MCF 10A (cell line): ENCODE measurements at regions of chr6 and their contacts with region 1.

Region 1: DNA sequence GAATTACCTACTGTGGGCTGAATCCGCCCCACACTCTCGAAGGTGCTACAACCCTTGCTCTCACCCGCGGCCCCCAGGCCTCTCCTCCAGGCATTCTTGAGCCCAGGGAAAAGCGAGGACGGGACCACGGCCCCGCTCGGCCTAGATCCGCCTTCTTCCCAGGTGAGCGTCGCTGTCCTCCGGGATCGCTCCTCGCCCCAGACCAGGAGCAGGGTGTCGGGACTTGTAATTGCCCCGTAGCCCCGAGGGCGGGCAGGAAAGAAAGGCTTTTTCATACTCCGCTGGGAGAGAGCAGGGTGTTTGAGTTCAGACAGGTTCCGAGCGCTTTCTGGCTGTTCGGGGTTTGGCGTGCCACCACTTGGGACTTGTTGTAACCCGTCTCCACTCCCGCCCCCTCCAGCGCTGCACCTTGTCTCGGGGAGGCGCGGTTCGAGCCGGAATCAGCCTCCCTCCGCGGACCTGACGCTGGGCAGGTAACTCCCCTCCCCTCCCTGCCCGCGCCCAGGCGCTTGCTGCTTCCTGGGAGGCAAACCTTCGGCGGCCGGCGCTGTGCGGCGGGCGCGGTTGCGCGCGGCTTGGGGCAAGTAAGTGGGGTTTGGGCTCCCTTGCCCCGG is at the start of gene FAM83B:
- DNase-seq: peak; percentile 94
- H3K4me3 Mint-ChIP-seq: peak within 1 kb of the TSS; percentile 88
- H3K27ac Mint-ChIP-seq: peak within 1 kb of the TSS; percentile 97
- H3K4me1 Mint-ChIP-seq: peaks cover 49% of the 10 kb centered on the region
- H3K27me3 Mint-ChIP-seq: no peaks in the 10 kb centered on the region
- CTCF ChIP-seq: no peak
- total RNA-seq, gene FAM83B: 22.3 and 25.4 TPM in 2 replicates

Region 2: GRCh38 chr6:54717849-54718455 is 128.4 kb before region 1 on chr6:
- CTCF ChIA-PET with region 1: interaction called, 9 read pairs
- POLR2A ChIA-PET with region 1: interaction called, 32 read pairs
- intact Hi-C with region 1: loop called (anchors 1 kb)
- DNase-seq: peak; percentile 80
- H3K4me3 Mint-ChIP-seq: no peak overlapping the region
- H3K27ac Mint-ChIP-seq: no peak overlapping the region
- H3K4me1 Mint-ChIP-seq: peaks cover 16% of the 10 kb centered on the region
- H3K27me3 Mint-ChIP-seq: no peaks in the 10 kb centered on the region
- CTCF ChIP-seq: peak; percentile 77

Region 3: GRCh38 chr6:54827010-54827409 is 19.3 kb before region 1 on chr6:
- CTCF ChIA-PET with region 1: no interaction called
- POLR2A ChIA-PET with region 1: no interaction called
- intact Hi-C with region 1: no loop called
- DNase-seq: no peak
- H3K4me3 Mint-ChIP-seq: no peak overlapping the region
- H3K27ac Mint-ChIP-seq: no peak overlapping the region
- H3K4me1 Mint-ChIP-seq: no peaks in the 10 kb centered on the region
- H3K27me3 Mint-ChIP-seq: no peaks in the 10 kb centered on the region
- CTCF ChIP-seq: no peak

Region 4: DNA sequence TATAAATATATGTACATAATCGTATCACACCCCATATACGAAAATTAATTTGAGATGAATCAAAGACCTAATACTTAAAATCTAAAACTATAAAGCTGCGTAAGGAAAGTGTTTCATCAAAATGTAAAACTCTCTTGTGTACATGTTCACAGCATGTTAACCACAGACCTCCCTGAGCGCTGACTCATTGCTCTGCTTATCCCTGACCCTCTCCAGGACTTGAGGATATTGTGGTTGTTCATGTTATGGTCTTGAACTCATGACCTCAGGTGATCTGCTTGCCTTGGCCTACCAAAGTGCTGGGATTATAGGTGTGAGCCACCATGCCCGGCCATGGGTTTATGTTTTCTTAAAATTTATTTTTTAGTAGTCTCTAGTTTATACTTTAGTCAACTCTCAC is 14.4 kb after region 1 on chr6:
- CTCF ChIA-PET with region 1: interaction called, 6 read pairs
- POLR2A ChIA-PET with region 1: interaction called, 33 read pairs
- intact Hi-C with region 1: no loop called
- DNase-seq: peak; percentile 78
- H3K4me3 Mint-ChIP-seq: no peak overlapping the region
- H3K27ac Mint-ChIP-seq: peak overlapping the region; percentile 63
- H3K4me1 Mint-ChIP-seq: peaks cover 7% of the 10 kb centered on the region
- H3K27me3 Mint-ChIP-seq: no peaks in the 10 kb centered on the region
- CTCF ChIP-seq: no peak

Region 5: DNA sequence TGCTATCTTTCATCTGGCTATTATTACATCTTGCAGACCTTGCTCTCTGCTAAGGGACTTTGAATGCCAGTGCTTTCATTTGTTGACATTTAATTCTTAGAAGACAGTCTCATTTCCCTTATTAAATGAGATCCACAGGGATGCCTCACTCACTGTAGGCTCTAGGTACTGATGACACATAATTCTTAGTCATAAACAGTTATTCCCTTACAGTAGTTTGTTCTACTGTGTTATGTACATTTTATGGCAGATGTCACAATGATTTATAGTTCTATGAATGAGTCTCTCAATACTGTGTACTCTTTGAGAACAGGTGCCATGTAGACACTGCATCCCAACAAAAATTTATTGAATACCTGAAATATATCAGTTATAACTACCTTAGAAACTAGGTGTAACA is 70.5 kb after region 1 on chr6:
- CTCF ChIA-PET with region 1: no interaction called
- POLR2A ChIA-PET with region 1: interaction called, 3 read pairs
- intact Hi-C with region 1: loop called (anchors 2 kb)
- DNase-seq: peak; percentile 74
- H3K4me3 Mint-ChIP-seq: no peak overlapping the region
- H3K27ac Mint-ChIP-seq: no peak overlapping the region
- H3K4me1 Mint-ChIP-seq: peaks cover 16% of the 10 kb centered on the region
- H3K27me3 Mint-ChIP-seq: no peaks in the 10 kb centered on the region
- CTCF ChIP-seq: no peak

Region 6: DNA sequence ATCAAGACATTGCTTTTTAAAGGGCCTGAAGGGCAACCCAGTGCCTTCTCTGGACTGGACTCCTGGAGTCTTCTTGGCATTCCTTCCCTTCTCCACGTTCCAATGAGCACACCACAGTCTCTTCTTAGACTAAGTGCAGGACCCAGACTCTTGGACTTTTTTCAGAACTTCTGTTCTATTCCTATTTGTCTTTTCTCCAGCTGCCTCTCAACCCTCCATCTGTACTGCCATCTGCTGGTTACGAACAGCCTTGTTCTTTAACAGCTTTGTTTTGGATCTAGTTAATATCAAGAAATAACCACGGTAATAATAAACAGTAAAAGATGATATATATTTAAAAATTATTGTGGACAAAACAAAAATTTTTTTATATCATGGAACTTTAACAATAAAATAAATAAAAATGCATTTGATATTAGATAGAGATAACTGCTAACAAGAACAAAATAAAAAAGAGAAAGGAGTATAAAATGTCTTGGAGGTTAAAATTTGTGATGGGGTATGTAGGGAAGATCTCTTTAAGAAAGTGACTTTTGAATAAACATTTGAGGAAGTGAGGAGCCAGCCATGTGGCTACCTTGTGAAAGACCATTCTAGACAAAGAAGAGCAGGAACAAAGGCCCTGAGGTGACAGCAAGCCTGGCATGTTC is 222.9 kb after region 1 on chr6:
- CTCF ChIA-PET with region 1: interaction called, 3 read pairs
- POLR2A ChIA-PET with region 1: interaction called, 4 read pairs
- intact Hi-C with region 1: loop called (anchors 1 kb)
- DNase-seq: peak; percentile 63
- H3K4me3 Mint-ChIP-seq: no peak overlapping the region
- H3K27ac Mint-ChIP-seq: no peak overlapping the region
- H3K4me1 Mint-ChIP-seq: no peaks in the 10 kb centered on the region
- H3K27me3 Mint-ChIP-seq: no peaks in the 10 kb centered on the region
- CTCF ChIP-seq: peak; percentile 65